ENCODE measurements at regions of chr1 and their contacts with region 1.

Region 1: GRCh38 chr1:67760030-67760821 is 73.0 kb downstream of the GNG12 start:
- DNase-seq: peak; percentile 75
- ATAC-seq: peak; percentile 79
- H3K4me3 Mint-ChIP-seq: no peak overlapping the region
- H3K27ac Mint-ChIP-seq: no peak overlapping the region
- H3K4me1 Mint-ChIP-seq: no peaks in the 10 kb centered on the region
- H3K27me3 Mint-ChIP-seq: peaks cover 23% of the 10 kb centered on the region
- CTCF ChIP-seq: peak; percentile 92

Region 2: DNA sequence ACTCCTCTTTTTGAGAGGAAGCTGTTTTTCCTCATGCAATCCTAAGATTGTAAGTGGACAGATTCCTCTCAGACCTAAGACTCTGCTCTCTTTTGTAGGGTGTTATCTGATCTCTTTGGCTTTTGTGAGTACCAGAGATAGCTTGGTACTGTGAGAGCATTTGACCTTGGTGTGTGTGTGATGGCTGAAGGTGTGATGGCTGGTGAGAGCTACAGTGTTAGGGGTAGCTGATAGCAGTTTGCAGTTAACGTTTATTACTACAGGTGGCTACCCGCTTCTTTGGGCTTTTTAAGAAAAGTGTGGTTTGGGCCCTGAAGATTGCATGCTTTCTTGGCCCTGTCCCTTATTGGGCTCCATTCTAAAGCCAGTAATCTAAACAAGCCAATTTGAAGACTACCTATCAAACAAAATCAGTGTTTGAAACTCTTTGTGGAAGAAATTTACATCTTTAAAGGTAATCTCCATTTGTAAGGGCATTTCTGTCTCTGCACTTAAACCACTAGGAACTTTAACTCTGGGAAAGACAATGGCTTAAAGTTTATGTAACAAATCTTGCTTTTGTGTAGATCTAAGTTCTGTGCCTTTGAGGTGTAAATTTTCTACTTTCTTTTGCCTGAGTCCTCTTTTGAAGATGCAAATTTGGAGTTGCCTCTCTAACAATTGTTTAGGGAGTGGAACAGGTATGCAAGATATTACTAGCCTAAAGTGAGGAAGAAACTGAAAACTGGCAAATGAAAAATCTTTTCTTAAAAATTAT is 244.7 kb before region 1 on chr1:
- CTCF ChIA-PET with region 1: interaction called, 13 read pairs
- POLR2A ChIA-PET with region 1: no interaction called
- intact Hi-C with region 1: no loop called
- DNase-seq: no peak
- ATAC-seq: no peak
- H3K4me3 Mint-ChIP-seq: no peak overlapping the region
- H3K27ac Mint-ChIP-seq: no peak overlapping the region
- H3K4me1 Mint-ChIP-seq: no peaks in the 10 kb centered on the region
- H3K27me3 Mint-ChIP-seq: no peaks in the 10 kb centered on the region
- CTCF ChIP-seq: no peak

Region 3: GRCh38 chr1:67544921-67545320 is 215.3 kb before region 1 on chr1:
- CTCF ChIA-PET with region 1: interaction called, 81 read pairs
- POLR2A ChIA-PET with region 1: no interaction called
- intact Hi-C with region 1: no loop called
- DNase-seq: no peak
- ATAC-seq: no peak
- H3K4me3 Mint-ChIP-seq: no peak overlapping the region
- H3K27ac Mint-ChIP-seq: no peak overlapping the region
- H3K4me1 Mint-ChIP-seq: no peaks in the 10 kb centered on the region
- H3K27me3 Mint-ChIP-seq: no peaks in the 10 kb centered on the region
- CTCF ChIP-seq: no peak

Region 4: GRCh38 chr1:67646145-67647035 is 113.8 kb before region 1 on chr1:
- CTCF ChIA-PET with region 1: interaction called, 10 read pairs
- POLR2A ChIA-PET with region 1: no interaction called
- intact Hi-C with region 1: no loop called
- DNase-seq: peak; percentile 9
- ATAC-seq: peak; percentile 68
- H3K4me3 Mint-ChIP-seq: no peak overlapping the region
- H3K27ac Mint-ChIP-seq: no peak overlapping the region
- H3K4me1 Mint-ChIP-seq: no peaks in the 10 kb centered on the region
- H3K27me3 Mint-ChIP-seq: no peaks in the 10 kb centered on the region
- CTCF ChIP-seq: no peak

Region 5: DNA sequence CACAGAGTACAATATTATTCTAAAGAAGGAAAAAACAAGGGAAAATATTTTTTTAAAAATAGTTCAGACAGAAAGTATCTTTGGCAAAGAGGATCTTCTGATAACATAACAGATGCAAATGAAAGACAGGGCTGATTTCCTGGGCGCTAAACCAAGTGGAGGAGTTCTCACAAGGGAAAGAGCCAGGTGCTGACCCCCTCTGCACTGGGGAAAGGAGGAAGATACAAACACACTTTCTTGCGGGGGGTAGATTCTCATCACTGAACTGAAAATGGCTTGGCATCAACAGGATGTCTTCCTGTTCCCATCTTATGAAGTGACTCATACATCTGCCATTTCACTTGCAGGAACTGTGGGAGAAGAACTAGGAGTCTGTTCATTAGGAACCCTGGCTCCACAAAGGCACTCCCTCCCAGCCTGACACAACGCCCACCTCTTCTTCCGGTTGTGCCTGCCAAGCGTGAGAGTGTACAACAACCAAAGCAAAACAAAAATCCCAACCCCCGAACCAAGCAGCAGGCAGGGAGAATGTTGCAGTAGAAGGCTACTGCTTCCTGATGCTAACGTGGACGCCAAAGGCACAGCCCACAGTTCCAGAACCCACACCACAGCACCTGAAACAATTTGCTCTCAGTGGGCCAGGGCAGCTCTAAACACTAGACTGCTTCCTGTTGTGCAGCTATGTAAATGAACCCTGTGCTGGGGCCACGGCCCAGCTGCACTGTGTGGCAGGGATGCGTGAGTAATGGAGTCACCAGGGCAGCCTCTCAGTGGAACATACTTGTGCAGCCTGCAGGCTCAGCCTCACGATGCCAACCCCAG is 24.2 kb before region 1 on chr1:
- CTCF ChIA-PET with region 1: interaction called, 22 read pairs
- POLR2A ChIA-PET with region 1: no interaction called
- intact Hi-C with region 1: no loop called
- DNase-seq: peak; percentile 79
- ATAC-seq: peak; percentile 99
- H3K4me3 Mint-ChIP-seq: peak overlapping the region; percentile 54
- H3K27ac Mint-ChIP-seq: peak overlapping the region; percentile 76
- H3K4me1 Mint-ChIP-seq: peaks cover 21% of the 10 kb centered on the region
- H3K27me3 Mint-ChIP-seq: no peaks in the 10 kb centered on the region
- CTCF ChIP-seq: no peak

Region 6: GRCh38 chr1:67777440-67777839 is 17.2 kb after region 1 on chr1:
- CTCF ChIA-PET with region 1: interaction called, 12 read pairs
- POLR2A ChIA-PET with region 1: no interaction called
- intact Hi-C with region 1: no loop called
- DNase-seq: no peak
- ATAC-seq: no peak
- H3K4me3 Mint-ChIP-seq: no peak overlapping the region
- H3K27ac Mint-ChIP-seq: no peak overlapping the region
- H3K4me1 Mint-ChIP-seq: no peaks in the 10 kb centered on the region
- H3K27me3 Mint-ChIP-seq: peaks cover 23% of the 10 kb centered on the region
- CTCF ChIP-seq: no peak

Region 7: DNA sequence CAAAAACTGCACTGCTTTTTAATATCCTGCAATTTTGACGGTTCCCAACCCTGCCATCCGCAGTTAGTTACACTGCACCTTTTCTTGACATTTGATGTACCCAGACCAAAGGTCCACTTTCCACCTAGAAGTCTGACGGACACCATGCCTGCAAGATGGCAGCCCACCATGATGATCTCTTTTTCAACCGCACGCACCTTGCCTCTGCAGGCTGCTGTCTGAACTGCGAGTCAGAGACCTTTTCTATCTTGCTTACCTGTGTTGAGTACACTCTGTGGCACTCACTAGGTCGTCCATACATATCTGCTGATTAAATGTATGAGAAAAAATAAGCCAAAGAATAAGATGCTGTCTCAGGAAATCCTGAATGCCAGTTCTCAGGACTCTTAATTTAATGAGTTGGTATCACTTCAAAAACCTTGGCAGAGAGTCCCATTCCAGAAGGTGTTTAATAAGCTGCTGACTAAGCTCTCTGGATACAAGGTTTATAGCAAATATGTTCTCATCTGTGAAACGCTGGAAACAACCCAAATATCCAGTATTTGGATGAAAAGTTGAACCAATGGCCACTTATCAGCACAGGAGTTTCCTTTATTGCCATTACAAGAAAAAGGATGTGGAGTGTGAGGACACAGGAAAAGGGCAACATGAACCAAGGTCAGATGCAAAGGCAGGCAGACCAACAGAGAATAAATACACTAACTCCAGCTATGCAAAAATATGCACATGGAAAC is 35.1 kb after region 1 on chr1:
- CTCF ChIA-PET with region 1: no interaction called
- POLR2A ChIA-PET with region 1: no interaction called
- intact Hi-C with region 1: no loop called
- DNase-seq: no peak
- ATAC-seq: no peak
- H3K4me3 Mint-ChIP-seq: no peak overlapping the region
- H3K27ac Mint-ChIP-seq: no peak overlapping the region
- H3K4me1 Mint-ChIP-seq: no peaks in the 10 kb centered on the region
- H3K27me3 Mint-ChIP-seq: peaks cover 2% of the 10 kb centered on the region
- CTCF ChIP-seq: no peak

Region 8: DNA sequence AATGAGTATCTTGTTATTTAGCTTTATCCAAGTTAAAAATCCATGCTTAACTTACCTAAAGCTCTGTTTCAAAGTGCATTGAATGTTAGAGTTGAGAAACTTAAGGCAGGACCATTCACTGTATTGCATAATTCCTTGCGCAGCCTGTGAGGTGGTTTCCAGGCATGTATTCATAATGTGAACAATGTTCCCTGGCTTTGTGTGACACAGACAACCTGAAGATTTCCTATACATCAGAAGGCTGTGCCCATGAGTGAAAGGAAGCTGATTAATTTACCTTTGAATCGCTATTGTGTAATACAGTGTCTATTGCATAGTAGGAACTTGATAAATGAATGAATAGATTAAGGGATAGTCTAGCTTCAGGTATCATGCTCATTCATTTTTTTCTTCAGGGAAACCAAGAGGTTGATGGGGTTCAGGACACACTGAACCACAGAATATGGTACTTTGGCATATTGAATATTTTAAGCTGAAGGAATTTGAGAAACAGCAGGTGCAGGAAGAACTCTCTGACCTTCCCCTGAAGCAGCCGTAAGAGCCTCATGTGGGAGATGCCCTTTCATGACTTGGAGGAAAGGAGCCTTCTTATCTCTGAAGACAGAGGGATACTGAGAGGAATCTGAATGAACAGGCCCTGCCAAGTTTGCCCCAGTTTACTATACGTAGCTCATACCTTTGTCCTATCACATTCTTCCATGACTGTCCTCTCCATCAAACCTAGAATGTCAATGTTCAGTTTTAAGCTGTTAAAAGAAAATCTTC is 161.7 kb after region 1 on chr1:
- CTCF ChIA-PET with region 1: no interaction called
- POLR2A ChIA-PET with region 1: no interaction called
- intact Hi-C with region 1: no loop called
- DNase-seq: no peak
- ATAC-seq: no peak
- H3K4me3 Mint-ChIP-seq: no peak overlapping the region
- H3K27ac Mint-ChIP-seq: no peak overlapping the region
- H3K4me1 Mint-ChIP-seq: no peaks in the 10 kb centered on the region
- H3K27me3 Mint-ChIP-seq: peaks cover 8% of the 10 kb centered on the region
- CTCF ChIP-seq: no peak

Region 9: DNA sequence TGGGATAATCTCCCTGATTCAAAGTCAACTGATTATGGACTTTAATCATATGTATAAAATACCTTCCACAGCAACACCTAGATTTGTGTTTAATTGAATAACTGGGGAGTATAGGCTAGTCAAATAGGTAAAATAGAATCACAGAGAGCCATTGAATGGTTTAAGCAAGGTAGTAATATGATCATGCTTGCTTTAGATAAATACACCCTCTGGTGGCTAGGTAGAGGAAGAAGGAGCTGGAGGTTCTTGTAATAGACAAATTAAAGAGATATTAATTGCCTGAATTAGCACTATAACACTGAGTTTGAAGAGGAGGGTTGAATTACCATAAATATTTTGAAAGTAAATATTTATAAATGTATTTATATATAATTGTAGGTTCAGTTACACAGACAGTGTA is 249.9 kb after region 1 on chr1:
- CTCF ChIA-PET with region 1: no interaction called
- POLR2A ChIA-PET with region 1: no interaction called
- intact Hi-C with region 1: no loop called
- DNase-seq: no peak
- ATAC-seq: no peak
- H3K4me3 Mint-ChIP-seq: no peak overlapping the region
- H3K27ac Mint-ChIP-seq: no peak overlapping the region
- H3K4me1 Mint-ChIP-seq: no peaks in the 10 kb centered on the region
- H3K27me3 Mint-ChIP-seq: peaks cover 5% of the 10 kb centered on the region
- CTCF ChIP-seq: no peak